Activated T-helper 2 cell treated with anti-CD3 and anti-CD28 coated beads, Interferon-gamma antibody, Interleukin-2, Interleukin-4, amounts not matched to agents 10 μg/mL and 5 μg/mL and 100 μg/mL, durations not matched to agents 14 hours and 24 hours and 36 hours (primary cell): ENCODE measurements at regions of chr14 and their contacts with region 1.

Region 1: GRCh38 chr14:49173765-49174373 is 412.3 kb downstream of the RPS29 start:
- DNase-seq: peak; percentile 17
- H3K4me3 Mint-ChIP-seq: no peak overlapping the region
- H3K27ac Mint-ChIP-seq: no peak overlapping the region
- H3K4me1 Mint-ChIP-seq: no peaks in the 10 kb centered on the region
- H3K27me3 Mint-ChIP-seq: no peaks in the 10 kb centered on the region

Region 2: GRCh38 chr14:47917345-47917954 is 1256.4 kb before region 1 on chr14:
- intact Hi-C with region 1: loop called (anchors 10 kb)
- DNase-seq: no peak
- H3K4me3 Mint-ChIP-seq: no peak overlapping the region
- H3K27ac Mint-ChIP-seq: no peak overlapping the region
- H3K4me1 Mint-ChIP-seq: no peaks in the 10 kb centered on the region
- H3K27me3 Mint-ChIP-seq: no peaks in the 10 kb centered on the region